Right cardiac atrium (tissue), 5 donors: ENCODE measurements at regions of chr10 and their contacts with region 1.

Region 1: GRCh38 chr10:43138021-43138756 is at the start of gene CSGALNACT2:
- DNase-seq: peak; percentile 87 to 95 (median 94)
- ATAC-seq: peak; percentile 95 to 97
- H3K4me3 ChIP-seq: peak within 1 kb of the TSS; percentile 98
- H3K27ac ChIP-seq: peak within 1 kb of the TSS; percentile 80
- H3K4me1 ChIP-seq: no peaks in the 10 kb centered on the region
- H3K27me3 ChIP-seq: no peaks in the 10 kb centered on the region
- total RNA-seq, gene CSGALNACT2: 10.0 to 17.2 (median 10.9) TPM

Region 2: GRCh38 chr10:43026011-43026973 is 111.9 kb before region 1 on chr10:
- intact Hi-C with region 1: no loop called
- DNase-seq: peak in 1 of 3 donors; percentile 34
- ATAC-seq: no peak
- H3K4me3 ChIP-seq: no peak overlapping the region
- H3K27ac ChIP-seq: no peak overlapping the region
- H3K4me1 ChIP-seq: no peaks in the 10 kb centered on the region
- H3K27me3 ChIP-seq: no peaks in the 10 kb centered on the region

Region 3: DNA sequence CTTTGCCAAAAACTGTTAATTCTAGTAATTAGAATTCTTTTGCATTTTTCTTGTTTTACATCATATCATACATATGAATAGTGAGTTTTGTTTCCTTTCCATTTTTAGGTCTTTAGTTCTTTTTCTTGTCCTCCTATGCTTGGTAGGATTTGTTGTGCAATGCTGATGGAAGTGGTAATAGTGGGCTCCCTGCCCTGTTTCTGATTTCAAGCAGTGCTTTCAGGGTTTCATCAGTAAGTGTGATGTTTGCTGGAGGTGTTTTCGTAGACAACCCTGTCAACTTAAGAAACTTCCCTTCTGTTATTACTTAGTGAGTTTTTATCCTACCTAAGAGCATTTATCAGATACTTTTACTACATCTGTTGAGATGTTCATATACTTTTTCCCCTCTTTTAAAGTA is 50.5 kb after region 1 on chr10:
- intact Hi-C with region 1: loop called in 1 of 4 experiments (anchors 10 kb)
- DNase-seq: no peak
- ATAC-seq: no peak
- H3K4me3 ChIP-seq: no peak overlapping the region
- H3K27ac ChIP-seq: no peak overlapping the region
- H3K4me1 ChIP-seq: no peaks in the 10 kb centered on the region
- H3K27me3 ChIP-seq: no peaks in the 10 kb centered on the region